Transverse colon (tissue), 4 donors: ENCODE measurements at regions of chr21 and their contacts with region 1.

Region 1: DNA sequence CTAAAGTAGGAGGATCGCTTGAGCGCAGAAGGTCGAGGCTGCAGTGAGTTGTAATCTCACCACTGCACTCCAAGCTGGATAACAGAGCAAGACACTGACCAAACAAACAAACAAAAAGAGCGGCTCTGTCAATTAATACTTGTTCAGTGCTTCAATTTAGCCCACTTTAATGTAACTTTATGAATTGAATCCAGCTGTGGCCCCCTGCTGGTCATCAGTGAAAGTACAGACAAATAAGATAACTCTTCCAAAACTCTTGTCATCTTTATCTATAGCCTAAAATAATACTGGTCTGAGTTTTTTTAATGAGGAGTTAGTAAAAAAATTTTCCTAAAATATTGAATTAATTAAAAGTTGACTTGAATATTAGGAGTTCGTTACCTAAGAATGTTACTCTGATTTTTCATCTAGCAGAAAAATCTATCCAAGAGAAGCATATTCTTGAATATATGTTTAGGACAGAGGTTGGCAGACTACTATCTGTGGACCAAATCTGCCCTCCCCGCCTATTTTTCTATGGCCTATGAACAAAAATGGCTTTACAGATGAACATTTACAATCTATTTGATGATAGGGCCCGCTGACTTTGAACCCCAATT is 26.1 kb downstream of the ATP5PF start:
- DNase-seq: peak; percentile 21
- H3K4me3 ChIP-seq: no peak overlapping the region
- H3K27ac ChIP-seq: no peak overlapping the region
- H3K4me1 ChIP-seq: no peaks in the 10 kb centered on the region
- H3K27me3 ChIP-seq: no peaks in the 10 kb centered on the region
- CTCF ChIP-seq: peak; percentile 71 to 84 (median 78)
- EP300 ChIP-seq: no peak
- POLR2A ChIP-seq: no peak

Region 2: DNA sequence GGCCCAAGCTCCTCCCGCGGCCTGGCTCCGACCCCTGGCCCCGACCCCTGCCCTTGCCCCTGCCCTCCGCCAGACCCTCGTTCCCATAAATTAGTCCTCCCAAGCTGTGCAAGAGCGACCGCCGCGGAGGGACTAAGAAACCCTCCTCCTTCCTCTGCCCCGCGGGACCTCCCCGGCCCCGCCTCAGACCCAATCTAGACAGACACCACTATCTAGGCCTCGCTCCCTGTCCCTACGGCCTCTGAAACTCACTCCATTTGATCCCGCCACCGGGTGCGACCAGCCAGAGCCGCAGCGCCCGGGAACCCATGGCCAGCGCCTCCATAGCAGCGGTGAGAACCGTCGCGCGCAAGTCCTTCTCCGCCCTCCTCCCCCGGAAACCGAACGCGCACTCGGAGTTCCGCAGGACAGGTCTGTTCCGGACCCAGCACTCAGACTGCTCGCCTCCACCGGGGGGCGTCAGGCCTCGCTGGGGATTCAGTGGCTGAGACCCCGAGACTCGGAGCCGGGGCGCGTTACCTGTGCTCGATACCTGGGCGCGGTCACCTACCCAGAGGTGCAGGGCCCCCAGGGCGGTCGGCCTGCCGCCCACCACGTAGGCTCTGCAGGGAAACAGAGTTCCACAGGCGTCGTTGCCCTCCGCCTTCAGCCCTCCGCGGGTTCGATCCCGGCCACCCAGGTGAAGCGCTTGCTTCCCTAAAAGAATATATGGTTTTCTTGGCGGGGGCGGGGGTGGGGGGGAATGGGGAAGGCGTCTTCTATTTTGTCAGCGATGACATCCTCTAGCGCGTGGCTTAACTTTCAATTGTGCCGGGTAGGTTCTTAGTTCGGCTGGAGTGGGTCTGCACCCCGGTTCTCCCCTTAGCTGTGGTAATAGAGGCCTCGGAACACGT is 101.2 kb before region 1 on chr21 and contains the start of gene MRPL39:
- in situ Hi-C with region 1: loop called in 3 of 4 experiments (anchors 5 to 25 kb)
- intact Hi-C with region 1: loop called (anchors 2 kb)
- DNase-seq: peak; percentile 89
- H3K4me3 ChIP-seq: peak within 1 kb of the TSS; percentile 70 to 95 (median 74)
- H3K27ac ChIP-seq: peak within 1 kb of the TSS; percentile 78 to 88 (median 84)
- H3K4me1 ChIP-seq: peaks cover 9 to 31% (median 11%) of the 10 kb centered on the region in 4 donors
- H3K27me3 ChIP-seq: no peaks in the 10 kb centered on the region
- CTCF ChIP-seq: peak; percentile 36 to 71 (median 50)
- EP300 ChIP-seq: no peak
- POLR2A ChIP-seq: peak; percentile 55
- total RNA-seq, gene MRPL39: 10.1 to 16.8 (median 14.9) TPM in 3 of 4 donors, not detected in the other

Region 3: GRCh38 chr21:25626757-25627156 is 81.8 kb before region 1 on chr21:
- in situ Hi-C with region 1: loop called in 2 of 4 experiments (anchors 10 to 25 kb)
- intact Hi-C with region 1: no loop called
- DNase-seq: no peak
- H3K4me3 ChIP-seq: no peak overlapping the region
- H3K27ac ChIP-seq: no peak overlapping the region
- H3K4me1 ChIP-seq: no peaks in the 10 kb centered on the region
- H3K27me3 ChIP-seq: no peaks in the 10 kb centered on the region
- CTCF ChIP-seq: no peak
- EP300 ChIP-seq: no peak
- POLR2A ChIP-seq: no peak

Region 4: GRCh38 chr21:25772686-25773085 is 64.1 kb after region 1 on chr21:
- in situ Hi-C with region 1: no loop called
- intact Hi-C with region 1: no loop called
- DNase-seq: no peak
- H3K4me3 ChIP-seq: no peak overlapping the region
- H3K27ac ChIP-seq: no peak overlapping the region
- H3K4me1 ChIP-seq: no peaks in the 10 kb centered on the region
- H3K27me3 ChIP-seq: no peaks in the 10 kb centered on the region
- CTCF ChIP-seq: no peak
- EP300 ChIP-seq: no peak
- POLR2A ChIP-seq: no peak